Right ventricle myocardium superior (tissue), 1 donor: ENCODE measurements at regions of chr7 and their contacts with region 1.

Region 1: GRCh38 chr7:20307119-20307518 is 23.6 kb upstream of the ITGB8 start:
- DNase-seq: no peak
- ATAC-seq: no peak

Region 2: DNA sequence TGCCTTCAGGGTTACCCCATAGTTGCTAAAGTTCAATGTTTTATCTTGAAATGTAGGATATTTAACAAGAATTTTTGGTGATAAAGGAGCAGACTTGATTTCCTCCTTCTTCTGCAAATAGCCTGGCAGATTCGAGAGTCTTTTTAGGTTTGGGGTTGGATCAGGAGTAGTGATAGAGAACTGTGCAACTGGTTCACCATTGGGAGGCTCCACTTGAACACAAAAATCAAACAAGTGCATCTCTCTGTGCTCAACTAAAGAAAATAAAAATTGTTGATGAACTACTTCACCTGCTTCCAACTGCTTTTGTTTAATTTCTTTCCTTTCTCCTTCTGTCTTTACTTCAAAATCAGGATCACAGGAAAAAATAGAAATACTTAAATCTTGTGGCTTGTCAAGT is 148.4 kb before region 1 on chr7:
- intact Hi-C with region 1: loop called (anchors 10 kb)
- DNase-seq: no peak
- ATAC-seq: peak; percentile 81